Activated CD8-positive, alpha-beta memory T cell treated with anti-CD3 and anti-CD28 coated beads, Interleukin-2, amount 10 ng/mL, durations not matched to agents 7 days and 5 days (primary cell): ENCODE measurements at regions of chr17 and their contacts with region 1.

Region 1: GRCh38 chr17:56819431-56820145 is 14.1 kb downstream of the C17orf67 start:
- DNase-seq: peak; percentile 81
- ATAC-seq: peak; percentile 83
- H3K4me3 Mint-ChIP-seq: no peak overlapping the region
- H3K27ac Mint-ChIP-seq: no peak overlapping the region
- H3K4me1 Mint-ChIP-seq: peaks cover 21% of the 10 kb centered on the region
- H3K27me3 Mint-ChIP-seq: no peaks in the 10 kb centered on the region

Region 2: DNA sequence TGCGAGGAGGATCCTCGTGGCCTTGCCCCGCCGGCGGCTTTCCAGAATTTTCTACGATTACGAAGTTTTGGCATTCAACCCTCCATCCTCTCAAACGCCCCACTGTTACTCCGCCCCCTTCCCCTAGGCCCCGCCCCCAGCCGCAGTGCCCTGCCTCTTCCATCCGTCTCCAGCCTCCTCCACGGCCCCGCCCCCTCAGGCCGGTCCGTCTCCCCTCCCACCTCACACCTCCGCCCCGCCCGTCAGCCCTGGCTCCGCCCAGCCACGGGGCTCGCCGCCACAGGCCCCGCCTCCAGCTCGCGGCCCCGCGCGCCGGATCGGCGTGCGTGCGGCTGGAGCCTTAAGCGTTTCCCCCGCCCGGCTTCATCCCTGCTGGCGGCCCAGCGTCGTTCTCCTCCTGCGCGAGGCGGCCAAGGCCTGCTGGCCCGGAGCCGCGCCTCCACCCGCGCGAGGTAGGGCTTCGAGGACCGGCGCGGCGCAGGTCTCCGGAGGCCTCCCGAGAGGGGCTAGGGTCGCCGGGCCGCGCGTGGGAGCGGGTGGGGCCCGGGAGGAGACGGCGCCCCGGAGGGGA is 14.3 kb after region 1 on chr17 and contains the starts of genes C17orf67 and DGKE:
- CTCF ChIA-PET with region 1: interaction called, 36 read pairs
- DNase-seq: peak; percentile 99
- ATAC-seq: peak; percentile 88
- H3K4me3 Mint-ChIP-seq: peak within 1 kb of the TSS; percentile 81
- H3K27ac Mint-ChIP-seq: peak within 1 kb of the TSS; percentile 91
- H3K4me1 Mint-ChIP-seq: peaks cover 57% of the 10 kb centered on the region
- H3K27me3 Mint-ChIP-seq: no peaks in the 10 kb centered on the region
- total RNA-seq, gene C17orf67: 4.2 to 5.7 TPM
- total RNA-seq, gene DGKE: 30.6 to 36.4 TPM

Region 3: GRCh38 chr17:56939901-56940343 is 120.3 kb after region 1 on chr17:
- CTCF ChIA-PET with region 1: interaction called, 49 read pairs
- DNase-seq: no peak
- ATAC-seq: peak; percentile 66
- H3K4me3 Mint-ChIP-seq: no peak overlapping the region
- H3K27ac Mint-ChIP-seq: peak overlapping the region; percentile 49
- H3K4me1 Mint-ChIP-seq: peaks cover 24% of the 10 kb centered on the region
- H3K27me3 Mint-ChIP-seq: no peaks in the 10 kb centered on the region

Region 4: GRCh38 chr17:56960596-56961538 is 141.3 kb after region 1 on chr17 and contains the start of gene COIL:
- CTCF ChIA-PET with region 1: interaction called, 11 read pairs
- DNase-seq: peak; percentile 95
- ATAC-seq: peak; percentile 99
- H3K4me3 Mint-ChIP-seq: peak within 1 kb of the TSS; percentile 77
- H3K27ac Mint-ChIP-seq: peak within 1 kb of the TSS; percentile 87
- H3K4me1 Mint-ChIP-seq: peaks cover 25% of the 10 kb centered on the region
- H3K27me3 Mint-ChIP-seq: no peaks in the 10 kb centered on the region
- total RNA-seq, gene COIL: 16.6 to 21.3 TPM